Left ventricle myocardium superior (tissue), 1 donor: ENCODE measurements at regions of chr18 and their contacts with region 1.

Region 1: DNA sequence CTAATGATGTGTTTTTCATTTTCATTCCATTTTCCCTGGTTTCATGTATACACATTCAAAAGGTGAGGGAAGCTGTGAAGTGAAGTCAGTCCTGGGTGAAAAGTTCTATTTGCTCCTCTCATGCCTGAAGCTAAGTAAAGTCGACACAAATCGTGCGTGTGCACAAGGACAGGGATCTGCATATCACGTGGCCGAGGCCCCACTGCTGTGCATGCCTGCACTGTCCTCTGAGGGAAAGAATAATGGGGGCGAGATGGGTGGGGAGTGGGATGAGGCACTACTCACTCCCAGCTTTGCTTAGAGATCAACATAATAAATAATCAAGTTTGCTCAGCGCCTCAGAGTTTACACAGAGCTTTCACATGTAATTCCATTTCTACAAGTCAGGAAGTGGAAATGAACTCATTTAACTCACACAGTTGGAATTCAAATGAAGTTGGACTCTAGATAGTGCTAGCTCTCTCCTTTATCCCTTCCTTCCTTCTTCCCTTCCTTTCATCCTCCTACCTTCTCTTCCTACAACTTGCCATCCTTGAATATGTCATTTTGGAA is 5.1 kb upstream of the PTPRM start:
- DNase-seq: no peak
- ATAC-seq: no peak

Region 2: DNA sequence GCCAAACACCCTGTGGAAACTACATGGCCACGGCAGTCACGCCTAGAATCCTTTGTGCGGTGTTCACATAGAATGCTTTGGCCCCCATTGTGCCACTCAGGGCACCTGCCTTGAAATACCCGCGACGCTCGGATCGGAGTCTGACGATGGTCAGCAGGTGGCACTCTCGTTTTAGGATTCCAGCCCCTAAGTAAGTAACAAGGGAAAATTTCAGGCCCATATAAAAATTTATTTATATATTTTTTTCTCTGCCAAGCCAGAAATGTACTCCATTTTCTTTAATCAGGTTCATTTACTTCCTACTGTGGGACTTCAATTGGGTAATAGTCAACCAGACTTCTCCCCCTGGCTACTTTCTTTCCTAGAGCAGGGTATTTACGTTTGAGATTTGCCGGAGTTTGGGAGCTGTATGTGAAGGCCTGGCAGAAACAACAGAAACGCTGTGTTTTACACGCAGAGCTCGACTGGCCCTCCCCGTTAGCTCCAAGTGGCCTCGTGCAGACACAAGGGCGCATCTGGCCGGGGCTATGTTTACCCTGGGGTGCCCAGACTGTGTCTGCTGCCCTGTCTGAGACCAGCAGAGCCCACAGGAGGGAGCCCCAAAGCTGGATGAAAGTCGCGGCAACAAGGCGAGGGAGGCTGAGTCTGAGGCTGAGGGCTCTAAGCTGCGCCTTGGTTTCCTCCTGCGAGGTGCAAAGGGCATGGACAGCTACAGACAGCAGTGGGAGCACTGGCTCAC is 289.5 kb before region 1 on chr18:
- intact Hi-C with region 1: loop called (anchors 5 kb)
- DNase-seq: peak; percentile 74
- ATAC-seq: peak; percentile 87

Region 3: GRCh38 chr18:7479756-7480155 is 82.2 kb before region 1 on chr18:
- intact Hi-C with region 1: loop called (anchors 10 kb)
- DNase-seq: no peak
- ATAC-seq: no peak